ENCODE measurements at regions of chr1 and their contacts with region 1.

Region 1: GRCh38 chr1:235504496-235505222 is 407 bp upstream of the B3GALNT2 start:
- DNase-seq: peak; percentile 91
- H3K4me3 ChIP-seq: peak overlapping the region; percentile 90
- CTCF ChIP-seq: peak; percentile 87

Region 2: GRCh38 chr1:235527196-235527814 is 22.6 kb after region 1 on chr1:
- CTCF ChIA-PET with region 1: interaction called, 27 read pairs
- POLR2A ChIA-PET with region 1: interaction called, 3 read pairs
- DNase-seq: no peak
- H3K4me3 ChIP-seq: no peak overlapping the region
- CTCF ChIP-seq: no peak

Region 3: GRCh38 chr1:235532360-235532759 is 27.7 kb after region 1 on chr1:
- CTCF ChIA-PET with region 1: interaction called, 27 read pairs
- POLR2A ChIA-PET with region 1: no interaction called
- DNase-seq: peak; percentile 40
- H3K4me3 ChIP-seq: no peak overlapping the region
- CTCF ChIP-seq: no peak

Region 4: GRCh38 chr1:235791532-235792060 is 286.9 kb after region 1 on chr1:
- CTCF ChIA-PET with region 1: interaction called, 13 read pairs
- POLR2A ChIA-PET with region 1: no interaction called
- DNase-seq: no peak
- H3K4me3 ChIP-seq: no peak overlapping the region
- CTCF ChIP-seq: no peak

Region 5: GRCh38 chr1:235806123-235806522 is 301.5 kb after region 1 on chr1:
- CTCF ChIA-PET with region 1: no interaction called
- POLR2A ChIA-PET with region 1: no interaction called
- DNase-seq: no peak
- H3K4me3 ChIP-seq: no peak overlapping the region
- CTCF ChIP-seq: no peak